Aorta (tissue), 5 donors: ENCODE measurements at regions of chr9 and their contacts with region 1.

Region 1: GRCh38 chr9:94783102-94783664 is 56.7 kb downstream of the AOPEP start:
- DNase-seq: peak; percentile 80
- ATAC-seq: peak; percentile 88
- H3K4me3 ChIP-seq: no peak overlapping the region
- H3K27ac ChIP-seq: peak overlapping the region; percentile 98
- H3K4me1 ChIP-seq: peaks cover 2% of the 10 kb centered on the region in 2 donors
- H3K27me3 ChIP-seq: no peaks in the 10 kb centered on the region

Region 2: DNA sequence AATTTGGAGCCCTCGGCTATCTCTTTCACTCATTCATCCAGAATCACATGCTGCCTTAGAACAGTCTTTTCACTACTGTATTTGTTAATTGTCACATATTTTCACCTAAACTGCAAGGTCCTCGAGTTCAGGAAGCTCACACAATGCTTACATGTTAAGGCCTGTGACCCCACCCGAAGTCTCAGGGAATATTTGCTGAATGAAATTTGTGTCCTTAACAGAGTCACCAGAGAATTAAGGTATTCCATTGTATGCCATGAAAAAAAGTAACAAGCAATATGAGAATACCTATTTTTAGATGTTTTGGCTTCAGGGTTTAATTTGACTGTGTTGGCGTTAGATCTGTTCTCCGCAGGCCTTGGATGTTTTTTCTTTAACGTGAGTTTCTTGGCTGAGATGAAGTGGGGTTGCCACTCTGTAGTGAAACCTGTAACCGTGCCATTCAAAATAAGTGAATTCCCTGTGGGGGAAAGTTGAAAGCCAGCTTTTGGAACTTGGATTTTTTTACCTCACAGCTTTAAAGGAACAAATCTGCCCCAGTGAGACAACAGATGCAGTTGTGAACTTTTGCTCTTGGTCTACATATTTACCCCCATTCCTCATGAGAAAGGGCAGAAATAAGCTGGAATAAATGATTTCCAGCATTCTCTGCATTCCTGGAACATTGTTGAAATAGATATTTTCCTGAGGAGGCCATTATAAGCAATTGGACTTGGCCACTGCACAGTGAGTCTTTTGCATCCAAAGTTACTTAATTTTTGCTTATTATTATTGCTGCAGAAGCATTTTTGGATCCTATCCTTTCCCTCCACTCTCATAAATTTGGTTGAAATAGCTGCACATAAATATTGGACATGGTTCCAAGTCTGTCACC is 107.9 kb before region 1 on chr9:
- intact Hi-C with region 1: loop called in 1 of 2 experiments (anchors 5 kb)
- DNase-seq: no peak
- ATAC-seq: peak; percentile 78
- H3K4me3 ChIP-seq: no peak overlapping the region
- H3K27ac ChIP-seq: peak overlapping the region; percentile 35 to 74
- H3K4me1 ChIP-seq: peaks cover 0 to 4% of the 10 kb centered on the region in 2 donors
- H3K27me3 ChIP-seq: no peaks in the 10 kb centered on the region

Region 3: GRCh38 chr9:94900222-94901018 is 117.2 kb after region 1 on chr9:
- intact Hi-C with region 1: loop called in 1 of 2 experiments (anchors 5 kb)
- DNase-seq: no peak
- ATAC-seq: peak; percentile 80
- H3K4me3 ChIP-seq: no peak overlapping the region
- H3K27ac ChIP-seq: peak overlapping the region; percentile 86 to 96
- H3K4me1 ChIP-seq: peaks cover 3 to 4% of the 10 kb centered on the region in 2 donors
- H3K27me3 ChIP-seq: no peaks in the 10 kb centered on the region

Region 4: GRCh38 chr9:95018099-95018936 is 235.1 kb after region 1 on chr9:
- intact Hi-C with region 1: loop called in 1 of 2 experiments (anchors 5 kb)
- DNase-seq: peak in 1 of 2 donors; percentile 80
- ATAC-seq: peak; percentile 51
- H3K4me3 ChIP-seq: peak overlapping the region; percentile 3 to 41
- H3K27ac ChIP-seq: peak overlapping the region; percentile 9 to 99
- H3K4me1 ChIP-seq: peaks cover 10 to 11% of the 10 kb centered on the region in 2 donors
- H3K27me3 ChIP-seq: no peaks in the 10 kb centered on the region

Region 5: GRCh38 chr9:95127249-95128176 is 344.3 kb after region 1 on chr9:
- intact Hi-C with region 1: loop called in 1 of 2 experiments (anchors 5 kb)
- DNase-seq: peak; percentile 92 to 96
- ATAC-seq: peak; percentile 94
- H3K4me3 ChIP-seq: peak overlapping the region; percentile 4 to 39
- H3K27ac ChIP-seq: peak overlapping the region in 1 of 2 donors; percentile 72
- H3K4me1 ChIP-seq: peaks cover 0 to 6% of the 10 kb centered on the region in 2 donors
- H3K27me3 ChIP-seq: no peaks in the 10 kb centered on the region